GM23248 (cell line): ENCODE measurements at regions of chr1 and their contacts with region 1.

Region 1: GRCh38 chr1:96966536-96967138 is 245.1 kb downstream of the PTBP2 start:
- DNase-seq: peak; percentile 64
- H3K4me3 ChIP-seq: no peak overlapping the region
- H3K27ac ChIP-seq: no peak overlapping the region
- H3K4me1 ChIP-seq: peaks cover 8% of the 10 kb centered on the region; the same call in 1 of the 2 replicates
- H3K27me3 ChIP-seq: no peaks in the 10 kb centered on the region

Region 2: GRCh38 chr1:98053471-98054366 is 1087.1 kb after region 1 on chr1:
- in situ Hi-C with region 1: loop called (anchors 25 kb)
- DNase-seq: peak; percentile 85
- H3K4me3 ChIP-seq: peak overlapping the region; percentile 68
- H3K27ac ChIP-seq: peak overlapping the region; percentile 30
- H3K4me1 ChIP-seq: peaks cover 31% of the 10 kb centered on the region
- H3K27me3 ChIP-seq: no peaks in the 10 kb centered on the region

Region 3: GRCh38 chr1:98468111-98468717 is 1501.6 kb after region 1 on chr1:
- in situ Hi-C with region 1: loop called (anchors 25 kb)
- DNase-seq: peak; percentile 69
- H3K4me3 ChIP-seq: no peak overlapping the region
- H3K27ac ChIP-seq: no peak overlapping the region
- H3K4me1 ChIP-seq: peaks cover 7% of the 10 kb centered on the region; the same call in 1 of the 2 replicates
- H3K27me3 ChIP-seq: no peaks in the 10 kb centered on the region